Activated naive CD4-positive, alpha-beta T cell treated with anti-CD3 and anti-CD28 coated beads, Interleukin-2, amount 10 ng/mL, durations not matched to agents 7 days and 5 days (primary cell): ENCODE measurements at regions of chr11 and their contacts with region 1.

Region 1: DNA sequence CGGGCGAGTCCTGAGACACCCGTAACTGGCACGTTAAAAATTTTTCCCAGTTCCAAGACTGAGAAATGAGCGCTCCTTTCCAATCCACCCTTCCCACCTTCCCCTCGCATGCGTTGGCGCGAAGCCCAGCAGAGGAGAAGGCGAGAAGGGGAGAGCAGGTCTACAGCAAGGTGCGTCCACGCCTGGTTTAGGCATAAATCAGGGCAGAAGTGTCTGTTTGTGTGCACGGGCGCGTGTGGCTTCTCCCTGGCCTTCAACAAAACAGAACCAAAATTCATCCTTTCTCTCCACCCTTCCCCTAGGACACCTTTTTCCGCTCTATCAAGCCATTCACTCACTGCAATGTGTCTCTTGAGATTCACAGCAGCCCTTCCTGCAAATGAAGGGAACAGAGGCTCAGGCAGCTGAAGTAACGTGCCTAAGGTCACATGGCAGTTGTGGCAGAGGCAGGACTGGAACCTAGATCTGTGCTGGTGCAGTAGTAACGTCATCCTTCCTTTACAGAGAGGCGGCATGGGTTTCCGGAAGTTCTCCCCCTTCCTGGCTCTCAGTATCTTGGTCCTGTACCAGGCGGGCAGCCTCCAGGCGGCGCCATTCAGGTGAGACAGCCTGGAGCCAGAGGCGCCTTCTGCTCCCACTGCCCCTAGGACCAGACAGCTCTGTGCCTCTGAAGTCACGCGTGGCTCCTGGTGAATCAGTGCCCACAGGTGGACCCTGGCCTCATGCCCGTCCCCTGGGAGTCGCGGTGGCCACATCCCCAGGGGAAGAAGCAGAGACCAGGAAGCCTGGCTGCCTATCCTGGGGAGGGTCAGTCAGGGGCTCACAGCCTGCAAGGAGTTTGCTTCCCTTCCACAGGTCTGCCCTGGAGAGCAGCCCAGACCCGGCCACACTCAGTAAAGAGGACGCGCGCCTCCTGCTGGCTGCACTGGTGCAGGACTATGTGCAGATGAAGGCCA is 1.1 kb downstream of the CALCB start:
- DNase-seq: peak; percentile 90
- H3K4me3 Mint-ChIP-seq: peak overlapping the region; percentile 72
- H3K27ac Mint-ChIP-seq: no peak overlapping the region
- H3K4me1 Mint-ChIP-seq: peaks cover 23% of the 10 kb centered on the region
- H3K27me3 Mint-ChIP-seq: peaks cover 61% of the 10 kb centered on the region

Region 2: GRCh38 chr11:15006139-15006759 is 68.2 kb before region 1 on chr11:
- CTCF ChIA-PET with region 1: interaction called, 10 read pairs
- DNase-seq: no peak
- H3K4me3 Mint-ChIP-seq: no peak overlapping the region
- H3K27ac Mint-ChIP-seq: no peak overlapping the region
- H3K4me1 Mint-ChIP-seq: no peaks in the 10 kb centered on the region
- H3K27me3 Mint-ChIP-seq: peaks cover 31% of the 10 kb centered on the region

Region 3: GRCh38 chr11:15091625-15092024 is 17.1 kb after region 1 on chr11:
- CTCF ChIA-PET with region 1: interaction called, 23 read pairs
- DNase-seq: no peak
- H3K4me3 Mint-ChIP-seq: no peak overlapping the region
- H3K27ac Mint-ChIP-seq: no peak overlapping the region
- H3K4me1 Mint-ChIP-seq: no peaks in the 10 kb centered on the region
- H3K27me3 Mint-ChIP-seq: peaks cover 16% of the 10 kb centered on the region

Region 4: GRCh38 chr11:15127341-15127740 is 52.9 kb after region 1 on chr11:
- CTCF ChIA-PET with region 1: no interaction called
- DNase-seq: no peak
- H3K4me3 Mint-ChIP-seq: no peak overlapping the region
- H3K27ac Mint-ChIP-seq: no peak overlapping the region
- H3K4me1 Mint-ChIP-seq: no peaks in the 10 kb centered on the region
- H3K27me3 Mint-ChIP-seq: peaks cover 45% of the 10 kb centered on the region